Dorsolateral prefrontal cortex (tissue), 120 donors: ENCODE measurements at regions of chr6 and their contacts with region 1.

Region 1: DNA sequence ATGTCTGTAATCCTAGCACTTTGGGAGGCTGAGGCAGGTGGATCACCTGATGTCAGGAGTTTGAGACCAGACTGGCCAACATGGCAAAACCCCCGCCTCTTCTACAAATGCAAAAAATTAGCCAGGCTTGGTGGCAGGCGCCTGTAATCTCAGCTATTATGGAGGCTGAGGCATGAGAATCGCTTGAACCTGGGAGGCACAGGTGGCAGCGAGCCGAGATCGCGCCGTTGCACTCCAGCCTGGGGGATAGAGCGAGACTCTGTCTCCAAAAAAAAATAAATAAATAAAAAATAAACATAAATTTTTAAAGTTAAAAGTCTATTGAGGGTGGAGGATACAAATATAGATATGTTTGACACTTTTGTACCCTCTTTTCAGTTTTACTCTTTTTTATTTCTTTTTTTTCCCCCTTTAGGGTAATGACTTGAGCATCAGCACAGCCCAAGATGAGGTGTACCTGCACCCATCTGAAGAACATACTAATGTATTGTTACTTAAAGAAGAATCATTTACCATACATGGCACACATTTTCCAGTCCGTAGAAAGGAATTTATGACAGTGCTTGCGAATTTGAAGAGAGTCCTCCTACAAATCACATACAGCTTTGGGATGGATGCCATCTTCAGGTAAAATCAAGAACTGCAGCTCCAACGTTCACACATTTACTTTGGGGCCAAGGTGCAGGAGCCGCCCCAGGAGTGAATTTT is 368.9 kb downstream of the LAMA2 start:
- DNase-seq: peak in 3 of 10 donors; percentile 14 to 66 (median 43)
- H3K4me3 ChIP-seq: peak overlapping the region in 18 of 59 donors; percentile 2 to 34 (median 20)
- H3K27ac ChIP-seq: peak overlapping the region in 8 of 59 donors; percentile 2 to 77 (median 26)
- H3K27me3 ChIP-seq: no peaks in the 10 kb centered on the region
- CTCF ChIP-seq: peak; percentile 67 to 95 (median 88)

Region 2: DNA sequence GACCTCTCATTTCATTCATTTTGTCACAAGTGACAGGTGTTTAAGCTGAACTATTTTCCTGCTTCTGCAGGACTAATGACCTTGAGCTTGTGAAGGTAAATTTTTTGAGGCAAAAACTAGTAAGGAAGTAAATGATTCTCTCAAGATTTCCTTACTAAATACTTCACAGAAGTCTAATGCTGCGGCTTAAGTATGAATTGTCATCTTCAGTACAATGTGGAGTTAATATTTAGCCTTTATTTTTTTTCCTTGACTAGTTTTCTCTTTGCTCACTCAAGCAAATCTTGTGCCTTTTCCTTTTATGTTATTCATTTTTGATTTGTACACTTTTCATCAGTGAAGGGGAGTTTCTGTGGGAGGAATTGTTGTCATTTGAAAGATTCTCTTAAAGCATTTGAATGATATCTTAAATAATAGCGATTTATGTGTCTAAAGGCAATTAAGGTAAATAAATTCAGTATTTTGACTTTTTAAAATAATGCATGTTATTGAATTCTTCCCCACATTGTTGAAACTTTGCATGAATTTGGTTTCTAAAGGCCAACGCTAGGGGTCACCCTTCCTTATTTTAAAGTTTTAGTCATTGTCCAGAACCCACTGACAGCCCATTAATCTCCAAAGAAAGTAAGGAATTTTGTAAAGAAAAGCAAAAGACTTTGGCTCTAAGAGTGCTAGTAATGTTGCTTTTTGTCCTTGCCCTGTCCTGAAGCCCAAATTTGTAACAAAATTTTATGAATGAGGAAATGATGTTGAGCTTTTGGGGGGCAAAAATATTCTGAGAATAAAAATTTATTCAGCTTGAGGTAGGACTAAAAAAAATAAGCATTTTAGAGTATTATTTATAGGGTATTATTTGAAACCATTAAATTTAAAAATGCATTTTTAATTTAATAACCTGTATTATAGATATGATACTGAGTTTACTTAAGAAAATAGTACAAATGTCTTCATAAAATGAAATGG is 526.3 kb before region 1 on chr6:
- intact Hi-C with region 1: loop called (anchors 10 kb)
- DNase-seq: peak in 1 of 10 donors; percentile 12
- H3K4me3 ChIP-seq: no peak overlapping the region
- H3K27ac ChIP-seq: no peak overlapping the region
- H3K27me3 ChIP-seq: no peaks in the 10 kb centered on the region
- CTCF ChIP-seq: peak; percentile 43 to 86 (median 75)

Region 3: GRCh38 chr6:128731249-128732165 is 520.3 kb before region 1 on chr6:
- intact Hi-C with region 1: loop called (anchors 10 kb)
- DNase-seq: no peak
- H3K4me3 ChIP-seq: no peak overlapping the region
- H3K27ac ChIP-seq: peak overlapping the region in 26 of 59 donors; percentile 6 to 66 (median 36)
- H3K27me3 ChIP-seq: no peaks in the 10 kb centered on the region
- CTCF ChIP-seq: peak in 55 of 56 donors; percentile 34 to 85 (median 65)

Region 4: GRCh38 chr6:128807577-128807976 is 444.2 kb before region 1 on chr6:
- intact Hi-C with region 1: loop called in 1 of 2 experiments (anchors 10 kb)
- DNase-seq: no peak
- H3K4me3 ChIP-seq: no peak overlapping the region
- H3K27ac ChIP-seq: no peak overlapping the region
- H3K27me3 ChIP-seq: no peaks in the 10 kb centered on the region
- CTCF ChIP-seq: peak in 55 of 56 donors; percentile 24 to 73 (median 56)

Region 5: GRCh38 chr6:129133770-129134192 is 118.0 kb before region 1 on chr6:
- intact Hi-C with region 1: loop called (anchors 5 kb)
- DNase-seq: no peak
- H3K4me3 ChIP-seq: peak overlapping the region in 7 of 59 donors; percentile 2 to 28 (median 15)
- H3K27ac ChIP-seq: peak overlapping the region in 55 of 59 donors; percentile 24 to 89 (median 76)
- H3K27me3 ChIP-seq: no peaks in the 10 kb centered on the region
- CTCF ChIP-seq: no peak

Region 6: DNA sequence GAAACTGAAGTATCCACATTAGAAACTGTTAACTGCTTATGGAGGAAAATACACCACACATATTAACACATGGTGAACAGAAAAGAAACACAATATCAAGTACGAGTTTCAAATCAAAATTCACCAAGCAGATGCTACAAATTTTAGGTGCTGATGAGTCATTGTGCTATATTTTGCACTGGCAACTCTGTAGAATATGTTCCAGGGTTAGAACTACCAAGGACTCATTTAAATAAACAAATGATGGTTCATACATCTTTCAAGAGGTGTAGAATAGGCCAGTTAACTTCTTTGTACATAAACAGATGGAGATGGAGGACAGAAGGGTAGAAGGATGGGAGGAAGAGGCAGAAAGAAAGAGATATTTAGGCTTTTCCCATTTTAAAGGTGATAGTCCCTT is 273.2 kb after region 1 on chr6:
- intact Hi-C with region 1: no loop called
- DNase-seq: no peak
- H3K4me3 ChIP-seq: no peak overlapping the region
- H3K27ac ChIP-seq: peak overlapping the region in 13 of 59 donors; percentile 6 to 55 (median 37)
- H3K27me3 ChIP-seq: no peaks in the 10 kb centered on the region
- CTCF ChIP-seq: no peak